Activated B cell treated with CpG ODN at 0.5 μM for 24 hours (primary cell): ENCODE measurements at regions of chr12 and their contacts with region 1.

Region 1: DNA sequence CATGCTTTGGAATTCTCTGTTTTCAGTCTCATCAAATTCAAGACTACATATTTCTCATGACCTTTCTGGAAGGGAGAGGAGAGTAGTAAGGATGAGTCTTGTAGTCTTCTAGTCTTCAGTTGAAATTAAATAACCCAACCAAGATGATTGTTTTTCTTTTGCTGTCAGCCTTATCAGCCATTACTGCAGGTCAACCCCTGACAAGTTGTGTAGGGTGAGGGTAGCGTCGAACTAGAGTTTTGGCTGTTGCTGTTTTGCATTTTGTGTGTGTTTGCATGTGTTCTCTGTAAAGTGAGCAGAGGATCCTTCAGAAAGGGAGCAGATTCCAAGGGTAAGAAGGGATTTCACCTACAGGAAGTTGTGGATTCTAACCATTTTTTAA is 28.4 kb downstream of the DIP2B start:
- DNase-seq: no peak
- ATAC-seq: no peak
- H3K4me3 Mint-ChIP-seq: no peak overlapping the region
- H3K27ac Mint-ChIP-seq: no peak overlapping the region
- H3K4me1 Mint-ChIP-seq: peaks cover 37% of the 10 kb centered on the region
- H3K27me3 Mint-ChIP-seq: no peaks in the 10 kb centered on the region
- CTCF ChIP-seq: no peak

Region 2: DNA sequence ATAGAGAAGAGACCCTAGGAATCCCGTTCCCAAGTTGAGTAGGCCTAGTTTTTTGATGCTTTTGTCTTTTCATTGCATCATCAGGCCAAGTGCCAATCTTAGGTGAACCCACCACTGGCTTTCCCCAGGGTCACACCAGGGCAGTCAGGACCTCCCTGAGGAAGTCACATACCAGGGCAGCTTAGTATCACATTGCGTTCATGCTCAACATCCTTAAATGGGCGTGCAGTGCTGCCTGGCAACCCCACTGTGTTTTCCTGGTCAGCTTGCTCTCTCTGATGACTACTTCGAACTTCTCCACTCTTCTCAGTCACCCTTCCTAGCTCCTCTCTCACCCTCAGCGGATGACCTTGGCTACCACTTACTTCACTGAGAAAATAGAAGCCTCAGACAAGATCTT is 466.8 kb before region 1 on chr12:
- CTCF ChIA-PET with region 1: no interaction called
- POLR2A ChIA-PET with region 1: no interaction called
- intact Hi-C with region 1: no loop called
- DNase-seq: no peak
- ATAC-seq: no peak
- H3K4me3 Mint-ChIP-seq: no peak overlapping the region
- H3K27ac Mint-ChIP-seq: no peak overlapping the region
- H3K4me1 Mint-ChIP-seq: peaks cover 4% of the 10 kb centered on the region
- H3K27me3 Mint-ChIP-seq: peaks cover 10% of the 10 kb centered on the region
- CTCF ChIP-seq: no peak

Region 3: GRCh38 chr12:50326636-50327284 is 206.4 kb before region 1 on chr12:
- CTCF ChIA-PET with region 1: no interaction called
- POLR2A ChIA-PET with region 1: no interaction called
- intact Hi-C with region 1: no loop called
- DNase-seq: no peak
- ATAC-seq: no peak
- H3K4me3 Mint-ChIP-seq: no peak overlapping the region
- H3K27ac Mint-ChIP-seq: no peak overlapping the region
- H3K4me1 Mint-ChIP-seq: no peaks in the 10 kb centered on the region
- H3K27me3 Mint-ChIP-seq: no peaks in the 10 kb centered on the region
- CTCF ChIP-seq: no peak

Region 4: GRCh38 chr12:50517456-50518048 is 15.6 kb before region 1 on chr12:
- CTCF ChIA-PET with region 1: interaction called, 3 read pairs
- POLR2A ChIA-PET with region 1: interaction called, 13 read pairs
- intact Hi-C with region 1: loop called (anchors 2 kb)
- DNase-seq: no peak
- ATAC-seq: peak; percentile 75
- H3K4me3 Mint-ChIP-seq: no peak overlapping the region
- H3K27ac Mint-ChIP-seq: no peak overlapping the region
- H3K4me1 Mint-ChIP-seq: peaks cover 44% of the 10 kb centered on the region
- H3K27me3 Mint-ChIP-seq: no peaks in the 10 kb centered on the region
- CTCF ChIP-seq: no peak

Region 5: GRCh38 chr12:50549885-50550284 is 16.7 kb after region 1 on chr12:
- CTCF ChIA-PET with region 1: no interaction called
- POLR2A ChIA-PET with region 1: interaction called, 10 read pairs
- intact Hi-C with region 1: loop called (anchors 2 kb)
- DNase-seq: no peak
- ATAC-seq: no peak
- H3K4me3 Mint-ChIP-seq: no peak overlapping the region
- H3K27ac Mint-ChIP-seq: peak overlapping the region; percentile 64
- H3K4me1 Mint-ChIP-seq: peaks cover 54% of the 10 kb centered on the region
- H3K27me3 Mint-ChIP-seq: no peaks in the 10 kb centered on the region
- CTCF ChIP-seq: no peak

Region 6: GRCh38 chr12:50564237-50564947 is 31.2 kb after region 1 on chr12:
- CTCF ChIA-PET with region 1: no interaction called
- POLR2A ChIA-PET with region 1: no interaction called
- intact Hi-C with region 1: loop called (anchors 5 kb)
- DNase-seq: no peak
- ATAC-seq: no peak
- H3K4me3 Mint-ChIP-seq: no peak overlapping the region
- H3K27ac Mint-ChIP-seq: no peak overlapping the region
- H3K4me1 Mint-ChIP-seq: peaks cover 70% of the 10 kb centered on the region
- H3K27me3 Mint-ChIP-seq: no peaks in the 10 kb centered on the region
- CTCF ChIP-seq: no peak

Region 7: GRCh38 chr12:50751948-50752721 is 218.9 kb after region 1 on chr12:
- CTCF ChIA-PET with region 1: no interaction called
- POLR2A ChIA-PET with region 1: no interaction called
- intact Hi-C with region 1: no loop called
- DNase-seq: no peak
- ATAC-seq: no peak
- H3K4me3 Mint-ChIP-seq: no peak overlapping the region
- H3K27ac Mint-ChIP-seq: peak overlapping the region; percentile 31
- H3K4me1 Mint-ChIP-seq: no peaks in the 10 kb centered on the region
- H3K27me3 Mint-ChIP-seq: no peaks in the 10 kb centered on the region
- CTCF ChIP-seq: no peak